ENCODE measurements at regions of chr1 and their contacts with region 1.

Region 1: GRCh38 chr1:119613769-119614720 is 34.0 kb downstream of the ZNF697 start:
- DNase-seq: peak; percentile 92
- H3K4me3 Mint-ChIP-seq: no peak overlapping the region
- H3K27ac Mint-ChIP-seq: no peak overlapping the region
- H3K4me1 Mint-ChIP-seq: no peaks in the 10 kb centered on the region
- H3K27me3 Mint-ChIP-seq: peaks cover 2% of the 10 kb centered on the region

Region 2: GRCh38 chr1:119647734-119648619 is 33.9 kb after region 1 on chr1 and contains the start of gene ZNF697:
- intact Hi-C with region 1: loop called (anchors 5 kb)
- DNase-seq: peak; percentile 81
- H3K4me3 Mint-ChIP-seq: peak within 1 kb of the TSS; percentile 88
- H3K27ac Mint-ChIP-seq: peak within 1 kb of the TSS; percentile 58
- H3K4me1 Mint-ChIP-seq: peaks cover 29% of the 10 kb centered on the region
- H3K27me3 Mint-ChIP-seq: peaks cover 81% of the 10 kb centered on the region
- total RNA-seq, gene ZNF697: 4.5 and 4.8 TPM in 2 replicates

Region 3: DNA sequence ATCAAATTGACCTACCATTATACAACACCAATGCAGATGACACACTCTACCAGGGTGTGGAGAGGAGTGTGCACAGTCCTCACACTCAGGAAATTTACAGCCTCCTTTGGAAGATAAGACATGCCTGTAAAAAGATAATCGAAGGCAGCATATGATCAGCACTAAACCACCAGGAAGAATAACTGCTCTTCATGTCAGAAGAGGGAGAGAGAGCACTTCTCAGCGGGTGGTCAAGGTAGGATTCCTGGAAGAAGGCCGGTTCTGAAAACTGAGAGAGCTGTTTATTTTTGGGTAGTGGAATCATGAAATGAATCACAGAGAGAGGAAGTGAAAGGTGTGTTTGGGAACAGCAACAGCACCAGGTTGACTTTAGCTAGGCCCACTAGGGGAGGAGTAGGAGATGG is 48.0 kb after region 1 on chr1:
- intact Hi-C with region 1: loop called (anchors 5 kb)
- DNase-seq: no peak
- H3K4me3 Mint-ChIP-seq: no peak overlapping the region
- H3K27ac Mint-ChIP-seq: no peak overlapping the region
- H3K4me1 Mint-ChIP-seq: peaks cover 10% of the 10 kb centered on the region
- H3K27me3 Mint-ChIP-seq: peaks cover 27% of the 10 kb centered on the region

Region 4: GRCh38 chr1:119675349-119676345 is 61.6 kb after region 1 on chr1:
- intact Hi-C with region 1: loop called (anchors 1 kb)
- DNase-seq: peak; percentile 90
- H3K4me3 Mint-ChIP-seq: peak overlapping the region; percentile 21
- H3K27ac Mint-ChIP-seq: no peak overlapping the region
- H3K4me1 Mint-ChIP-seq: no peaks in the 10 kb centered on the region
- H3K27me3 Mint-ChIP-seq: peaks cover 32% of the 10 kb centered on the region

Region 5: GRCh38 chr1:119853155-119853554 is 239.1 kb after region 1 on chr1:
- intact Hi-C with region 1: no loop called
- DNase-seq: peak; percentile 47
- H3K4me3 Mint-ChIP-seq: no peak overlapping the region
- H3K27ac Mint-ChIP-seq: no peak overlapping the region
- H3K4me1 Mint-ChIP-seq: no peaks in the 10 kb centered on the region
- H3K27me3 Mint-ChIP-seq: peaks cover 6% of the 10 kb centered on the region